ENCODE measurements at regions of chr2 and their contacts with region 1.

Region 1: DNA sequence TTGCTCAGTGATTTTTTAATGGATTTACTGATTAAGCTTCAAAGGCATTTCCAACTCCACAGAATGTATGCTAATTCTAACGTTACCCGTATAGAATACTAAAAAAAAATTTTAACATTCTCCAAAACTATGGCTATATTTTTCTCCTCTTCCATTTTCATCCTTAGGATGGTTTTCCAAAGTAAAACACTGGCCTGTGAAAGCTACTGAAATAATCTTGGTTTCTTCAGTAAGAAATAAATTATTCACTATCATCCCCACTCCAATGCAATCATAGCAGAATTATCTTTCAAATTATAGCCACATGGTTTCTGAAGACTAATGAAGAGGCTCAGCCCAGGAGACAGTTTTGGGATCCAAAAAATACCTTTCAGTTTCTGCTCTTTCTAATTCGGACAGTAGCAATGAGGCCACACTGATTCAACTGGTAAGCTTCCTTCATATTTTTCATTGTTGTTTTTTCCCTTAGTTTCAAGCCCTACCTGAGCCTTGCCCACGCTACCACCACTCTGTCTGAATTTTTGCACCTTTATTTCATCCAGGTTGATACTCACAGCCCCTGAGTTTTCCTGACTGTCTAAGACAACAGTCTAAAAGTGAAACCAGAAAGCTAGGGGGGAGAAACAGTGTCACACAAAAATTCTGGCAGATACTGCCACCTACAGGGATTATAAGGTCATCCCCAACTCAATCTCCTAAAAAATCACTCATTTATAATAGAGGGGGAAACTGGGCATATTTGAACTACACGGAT is 887.9 kb downstream of the NRXN1 start:
- DNase-seq: peak; percentile 43
- H3K4me3 ChIP-seq: peak overlapping the region; percentile 33 to 56; a peak in 2 of 4 replicates
- H3K27ac ChIP-seq: no peak overlapping the region; a peak in 1 of 4 replicates
- H3K4me1 ChIP-seq: no peaks in the 10 kb centered on the region; a peak in 1 of 4 replicates
- H3K27me3 ChIP-seq: no peaks in the 10 kb centered on the region
- CTCF ChIP-seq: peak; percentile 76
- EP300 ChIP-seq: no peak
- RAD21 ChIP-seq: peak; percentile 88

Region 2: DNA sequence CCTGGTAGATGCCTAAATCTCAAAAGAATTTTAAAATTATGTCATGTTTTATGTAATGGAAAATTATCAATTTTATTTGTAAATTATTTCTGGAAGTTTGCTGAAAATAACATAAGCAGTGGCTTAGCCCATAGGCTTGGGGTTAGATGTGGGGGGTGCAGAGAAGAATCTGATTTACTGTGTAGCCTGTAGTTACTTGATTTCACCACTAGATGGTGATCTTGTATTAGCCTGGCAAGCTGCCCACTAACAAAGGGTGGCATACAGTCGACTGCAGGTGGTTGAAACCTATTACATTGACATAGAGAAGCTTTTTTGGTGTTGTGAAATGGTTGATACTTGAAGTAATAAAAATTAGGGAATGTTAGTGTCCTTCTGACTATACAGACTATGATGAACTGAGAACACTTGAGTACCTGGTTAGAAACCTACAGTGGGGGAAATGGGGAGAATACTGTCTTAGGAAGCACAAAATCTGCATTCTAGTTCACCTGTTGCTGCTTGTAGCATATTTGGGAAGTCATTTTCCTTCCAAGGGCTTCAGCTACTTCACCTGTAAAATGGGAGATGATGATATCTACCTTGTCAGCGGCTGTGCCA is 1197.5 kb before region 1 on chr2:
- CTCF ChIA-PET with region 1: interaction called, 12 read pairs
- POLR2A ChIA-PET with region 1: no interaction called
- DNase-seq: peak; percentile 60
- H3K4me3 ChIP-seq: no peak overlapping the region; a peak in 1 of 4 replicates
- H3K27ac ChIP-seq: no peak overlapping the region
- H3K4me1 ChIP-seq: no peaks in the 10 kb centered on the region; a peak in 1 of 4 replicates
- H3K27me3 ChIP-seq: no peaks in the 10 kb centered on the region
- CTCF ChIP-seq: peak; percentile 89
- EP300 ChIP-seq: no peak
- RAD21 ChIP-seq: peak; percentile 97

Region 3: DNA sequence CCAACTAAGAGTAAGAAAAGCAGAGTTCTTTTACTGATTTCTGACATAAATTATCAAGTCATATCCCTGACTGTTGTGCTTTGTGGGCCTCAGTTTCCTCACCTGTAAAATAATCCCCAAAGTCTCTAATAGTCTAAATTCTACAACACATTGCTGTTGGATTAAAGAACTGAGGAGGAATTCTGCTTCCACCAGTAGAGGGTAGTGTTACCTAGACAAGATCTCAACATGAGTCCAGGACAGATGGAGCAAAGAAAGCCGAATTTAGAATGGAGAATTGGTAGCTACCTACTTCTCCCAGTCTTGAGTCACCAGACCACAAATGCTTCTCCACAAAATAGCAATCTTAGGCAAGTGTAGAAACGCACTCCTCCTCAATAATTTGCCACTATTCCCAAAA is 527.2 kb before region 1 on chr2:
- CTCF ChIA-PET with region 1: interaction called, 13 read pairs
- POLR2A ChIA-PET with region 1: no interaction called
- DNase-seq: peak; percentile 32
- H3K4me3 ChIP-seq: peak overlapping the region in 1 of 2 experiments; percentile 28; a peak in 1 of 4 replicates
- H3K27ac ChIP-seq: no peak overlapping the region
- H3K4me1 ChIP-seq: no peaks in the 10 kb centered on the region
- H3K27me3 ChIP-seq: no peaks in the 10 kb centered on the region
- CTCF ChIP-seq: peak; percentile 36
- EP300 ChIP-seq: no peak
- RAD21 ChIP-seq: peak; percentile 75

Region 4: GRCh38 chr2:49687918-49688317 is 456.1 kb before region 1 on chr2:
- CTCF ChIA-PET with region 1: interaction called, 49 read pairs
- POLR2A ChIA-PET with region 1: no interaction called
- DNase-seq: no peak
- H3K4me3 ChIP-seq: peak overlapping the region in 1 of 2 experiments; percentile 16; a peak in 1 of 4 replicates
- H3K27ac ChIP-seq: no peak overlapping the region
- H3K4me1 ChIP-seq: no peaks in the 10 kb centered on the region
- H3K27me3 ChIP-seq: no peaks in the 10 kb centered on the region
- CTCF ChIP-seq: peak; percentile 60
- EP300 ChIP-seq: no peak
- RAD21 ChIP-seq: peak; percentile 67

Region 5: DNA sequence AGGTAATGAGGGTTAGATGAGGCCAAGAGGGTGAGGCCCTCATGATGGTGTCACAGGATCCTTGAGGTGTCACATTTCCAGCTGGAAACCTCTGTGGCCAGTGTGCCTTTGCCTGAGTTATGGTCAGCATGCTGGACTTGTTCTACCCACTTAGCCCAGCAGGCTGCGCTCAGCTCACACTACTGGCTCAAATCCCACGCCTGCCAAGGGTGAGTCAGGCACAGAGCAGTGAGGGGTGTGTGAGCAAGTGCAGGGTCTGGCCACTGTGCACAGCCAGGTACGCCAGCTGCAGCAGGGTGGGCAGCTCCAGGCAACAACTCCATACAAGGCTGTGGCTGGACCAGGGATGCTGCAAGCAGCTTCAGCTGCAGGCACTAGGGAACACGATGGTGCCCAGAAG is 373.1 kb before region 1 on chr2:
- CTCF ChIA-PET with region 1: interaction called, 84 read pairs
- POLR2A ChIA-PET with region 1: no interaction called
- DNase-seq: peak; percentile 35
- H3K4me3 ChIP-seq: no peak overlapping the region; a peak in 1 of 4 replicates
- H3K27ac ChIP-seq: no peak overlapping the region
- H3K4me1 ChIP-seq: no peaks in the 10 kb centered on the region
- H3K27me3 ChIP-seq: no peaks in the 10 kb centered on the region
- CTCF ChIP-seq: peak; percentile 44
- EP300 ChIP-seq: no peak
- RAD21 ChIP-seq: peak; percentile 84